Common myeloid progenitor, CD34-positive (primary cell): ENCODE measurements at regions of chr4 and their contacts with region 1.

Region 1: DNA sequence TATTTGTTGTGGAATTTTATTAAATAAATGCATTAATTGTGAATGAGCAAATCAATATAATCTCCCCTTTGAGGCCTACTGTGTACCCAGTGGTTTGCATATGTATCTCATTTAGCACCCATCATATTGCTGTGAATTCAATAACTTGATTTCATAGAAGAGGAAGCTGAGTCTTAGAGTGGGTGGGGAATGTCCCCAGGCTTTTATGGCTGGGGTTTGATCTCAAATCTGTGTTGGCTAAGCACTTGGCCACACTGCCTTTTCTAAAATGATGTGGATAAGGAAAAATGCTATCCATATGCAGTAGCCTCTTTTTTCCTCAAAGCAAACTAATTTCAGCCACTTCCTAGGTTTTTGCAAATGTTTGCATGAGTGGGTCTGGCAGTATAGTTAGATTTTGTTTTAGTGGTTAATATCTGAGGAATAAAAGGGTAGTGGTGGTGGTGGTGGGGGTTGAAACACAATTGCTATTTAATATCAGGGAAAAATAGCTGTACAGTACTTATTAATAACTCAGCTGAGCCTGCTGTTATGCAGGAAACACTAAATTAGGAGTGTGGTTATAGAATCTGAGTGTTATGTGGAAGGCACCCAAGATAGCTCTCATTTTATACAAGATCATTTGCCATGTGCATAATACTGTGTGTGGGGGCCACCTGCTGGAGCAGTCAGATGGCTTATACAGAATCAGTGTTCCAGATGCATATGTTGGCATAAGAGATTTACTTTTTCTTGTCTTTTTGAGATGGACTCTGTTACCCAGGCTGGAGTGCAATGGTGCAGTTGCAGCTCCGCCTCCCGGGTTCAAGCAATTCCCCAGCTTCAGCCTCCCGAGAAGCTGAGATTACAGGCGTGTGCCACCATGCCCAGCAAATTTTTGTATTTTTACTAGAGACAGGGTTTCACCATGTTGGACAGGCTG is 108.0 kb downstream of the TMEM131L start:
- DNase-seq: peak; percentile 67 to 82 (median 80)
- H3K4me3 ChIP-seq: no peak overlapping the region
- H3K27ac ChIP-seq: no peak overlapping the region
- H3K4me1 ChIP-seq: peaks cover 0 to 11% (median 4%) of the 10 kb centered on the region in 4 experiments
- H3K27me3 ChIP-seq: no peaks in the 10 kb centered on the region

Region 2: DNA sequence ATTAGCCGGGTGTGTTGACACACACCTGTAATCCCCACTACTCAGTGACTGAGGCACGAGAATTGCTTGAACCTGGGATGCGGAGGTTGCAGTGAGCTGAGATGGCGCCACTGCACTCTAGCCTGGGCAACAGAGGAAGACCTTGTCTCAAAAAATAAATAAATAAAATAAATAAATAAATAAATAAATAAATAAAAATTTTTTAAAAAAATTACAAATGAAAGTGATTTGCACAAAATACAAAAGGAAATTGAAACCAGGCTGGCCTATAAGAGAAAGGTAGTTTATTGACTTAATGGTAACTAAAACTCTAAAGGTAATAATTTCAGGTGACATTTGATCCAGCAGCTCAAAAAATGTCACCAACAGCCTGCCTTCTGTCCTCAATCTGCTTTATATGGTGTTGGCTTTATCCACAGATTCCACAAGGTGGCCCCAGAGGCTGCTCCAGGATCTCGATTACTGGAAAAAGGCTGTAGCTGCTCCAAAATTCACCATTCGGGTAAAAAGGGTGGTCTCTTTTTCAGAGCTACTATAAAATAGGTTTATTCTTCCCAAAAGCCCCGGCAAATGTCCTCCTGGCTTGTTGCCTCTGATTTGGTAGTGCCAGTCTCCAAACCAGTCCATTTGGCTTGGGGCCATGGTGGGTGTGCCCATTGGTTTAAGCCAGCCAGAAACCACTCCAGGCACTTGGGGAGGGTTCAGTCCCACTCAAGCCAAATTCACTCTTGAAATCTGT is 431.3 kb before region 1 on chr4:
- CTCF ChIA-PET with region 1: interaction called, 16 read pairs
- POLR2A ChIA-PET with region 1: no interaction called
- DNase-seq: peak; percentile 74 to 88 (median 85)
- H3K4me3 ChIP-seq: peak overlapping the region in 2 of 7 experiments; percentile 35 to 59
- H3K27ac ChIP-seq: no peak overlapping the region
- H3K4me1 ChIP-seq: peaks cover 0 to 42% (median 24%) of the 10 kb centered on the region in 4 experiments
- H3K27me3 ChIP-seq: no peaks in the 10 kb centered on the region

Region 3: GRCh38 chr4:153344131-153345010 is 229.8 kb before region 1 on chr4 and contains the start of gene MND1:
- CTCF ChIA-PET with region 1: interaction called, 62 read pairs
- POLR2A ChIA-PET with region 1: interaction called, 3 read pairs
- DNase-seq: peak; percentile 80 to 90 (median 86)
- H3K4me3 ChIP-seq: peak within 1 kb of the TSS; percentile 82 to 96 (median 93)
- H3K27ac ChIP-seq: peak within 1 kb of the TSS in 1 of 2 experiments; percentile 50
- H3K4me1 ChIP-seq: peaks cover 12 to 30% (median 21%) of the 10 kb centered on the region in 4 experiments
- H3K27me3 ChIP-seq: no peaks in the 10 kb centered on the region

Region 4: GRCh38 chr4:153432968-153433753 is 141.0 kb before region 1 on chr4:
- CTCF ChIA-PET with region 1: interaction called, 13 read pairs
- POLR2A ChIA-PET with region 1: no interaction called
- DNase-seq: peak; percentile 63 to 86 (median 82)
- H3K4me3 ChIP-seq: peak overlapping the region in 2 of 7 experiments; percentile 20 to 55
- H3K27ac ChIP-seq: no peak overlapping the region
- H3K4me1 ChIP-seq: peaks cover 8 to 18% (median 14%) of the 10 kb centered on the region in 4 experiments
- H3K27me3 ChIP-seq: no peaks in the 10 kb centered on the region

Region 5: DNA sequence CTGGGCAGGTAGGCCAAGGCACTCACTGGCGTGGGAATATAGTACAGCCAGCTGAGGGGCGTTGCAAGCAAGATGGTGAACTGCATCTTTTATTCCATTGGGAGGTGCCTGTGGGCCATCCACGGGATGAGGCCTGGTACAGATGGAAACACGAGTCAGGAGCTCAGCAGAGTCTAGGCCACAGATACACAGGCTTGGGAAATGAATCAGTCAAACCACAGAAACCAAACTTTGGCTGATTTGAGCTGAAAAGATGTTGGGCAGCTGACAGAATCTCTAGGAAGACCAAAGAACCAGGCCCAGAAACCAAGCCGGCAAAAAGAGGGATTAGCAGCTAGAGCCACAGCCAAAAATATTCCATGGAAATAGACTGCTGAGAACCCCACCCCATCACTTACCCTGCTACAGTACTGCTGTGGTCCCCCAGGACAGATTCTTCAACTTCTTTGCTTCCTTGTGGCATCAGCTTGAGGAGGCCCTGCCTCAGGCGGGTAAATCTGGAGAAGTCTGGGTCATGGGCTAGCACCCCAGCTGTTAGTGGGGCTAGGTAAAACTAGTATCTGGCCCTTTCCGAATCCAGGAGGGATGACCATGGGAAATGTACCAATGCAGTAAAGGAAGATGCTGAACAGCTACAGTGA is 32.6 kb before region 1 on chr4:
- CTCF ChIA-PET with region 1: no interaction called
- POLR2A ChIA-PET with region 1: no interaction called
- DNase-seq: no peak
- H3K4me3 ChIP-seq: no peak overlapping the region
- H3K27ac ChIP-seq: no peak overlapping the region
- H3K4me1 ChIP-seq: peaks cover 0 to 5% (median 0%) of the 10 kb centered on the region in 4 experiments
- H3K27me3 ChIP-seq: no peaks in the 10 kb centered on the region